AG04450 (cell line): ENCODE measurements at regions of chr5 and their contacts with region 1.

Region 1: GRCh38 chr5:73215891-73216610 is 43.1 kb downstream of the TMEM174 start:
- DNase-seq: peak; percentile 38
- H3K4me3 ChIP-seq: peak overlapping the region; percentile 62
- H3K27ac ChIP-seq: peak overlapping the region; percentile 59
- H3K27me3 ChIP-seq: no peaks in the 10 kb centered on the region
- CTCF ChIP-seq: peak; percentile 67

Region 2: DNA sequence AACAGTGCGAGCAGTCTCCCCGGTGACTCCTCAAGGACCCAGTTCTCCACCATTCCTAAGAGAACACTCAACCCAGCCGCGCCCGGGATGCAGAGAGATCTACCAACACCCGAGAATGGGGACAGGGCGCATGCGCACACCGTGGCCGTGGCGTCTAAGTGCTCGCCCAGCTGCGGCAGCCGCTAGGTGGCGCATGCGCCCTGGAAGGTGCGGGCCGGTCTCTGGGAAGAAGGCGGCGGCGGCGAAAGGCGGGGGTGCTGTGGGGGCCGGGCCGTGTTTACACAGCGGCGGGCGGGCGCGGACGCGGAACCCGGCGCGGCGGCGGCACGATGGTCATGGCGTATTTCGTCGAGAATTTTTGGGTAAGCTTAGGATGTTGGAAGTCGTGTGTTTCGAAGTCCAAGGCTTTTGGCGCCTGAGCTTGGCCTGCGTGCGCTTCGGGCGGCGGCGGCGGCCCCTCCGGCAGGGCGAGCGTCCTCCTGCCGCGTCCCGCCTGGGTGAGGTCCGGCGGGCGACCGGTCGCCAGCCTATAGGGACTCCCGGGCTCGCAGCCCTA is 260.2 kb before region 1 on chr5 and contains the start of gene FCHO2:
- CTCF ChIA-PET with region 1: interaction called, 10 read pairs
- POLR2A ChIA-PET with region 1: no interaction called
- DNase-seq: peak; percentile 90
- H3K4me3 ChIP-seq: peak within 1 kb of the TSS; percentile 72
- H3K27ac ChIP-seq: peak within 1 kb of the TSS; percentile 96
- H3K27me3 ChIP-seq: no peaks in the 10 kb centered on the region
- CTCF ChIP-seq: peak; percentile 70
- polyA plus RNA-seq, gene FCHO2: 10.4 and 12.5 TPM in 2 replicates

Region 3: GRCh38 chr5:73088026-73088425 is 128.0 kb before region 1 on chr5:
- CTCF ChIA-PET with region 1: interaction called, 38 read pairs
- POLR2A ChIA-PET with region 1: interaction called, 3 read pairs
- DNase-seq: no peak
- H3K4me3 ChIP-seq: no peak overlapping the region
- H3K27ac ChIP-seq: no peak overlapping the region
- H3K27me3 ChIP-seq: no peaks in the 10 kb centered on the region
- CTCF ChIP-seq: no peak

Region 4: DNA sequence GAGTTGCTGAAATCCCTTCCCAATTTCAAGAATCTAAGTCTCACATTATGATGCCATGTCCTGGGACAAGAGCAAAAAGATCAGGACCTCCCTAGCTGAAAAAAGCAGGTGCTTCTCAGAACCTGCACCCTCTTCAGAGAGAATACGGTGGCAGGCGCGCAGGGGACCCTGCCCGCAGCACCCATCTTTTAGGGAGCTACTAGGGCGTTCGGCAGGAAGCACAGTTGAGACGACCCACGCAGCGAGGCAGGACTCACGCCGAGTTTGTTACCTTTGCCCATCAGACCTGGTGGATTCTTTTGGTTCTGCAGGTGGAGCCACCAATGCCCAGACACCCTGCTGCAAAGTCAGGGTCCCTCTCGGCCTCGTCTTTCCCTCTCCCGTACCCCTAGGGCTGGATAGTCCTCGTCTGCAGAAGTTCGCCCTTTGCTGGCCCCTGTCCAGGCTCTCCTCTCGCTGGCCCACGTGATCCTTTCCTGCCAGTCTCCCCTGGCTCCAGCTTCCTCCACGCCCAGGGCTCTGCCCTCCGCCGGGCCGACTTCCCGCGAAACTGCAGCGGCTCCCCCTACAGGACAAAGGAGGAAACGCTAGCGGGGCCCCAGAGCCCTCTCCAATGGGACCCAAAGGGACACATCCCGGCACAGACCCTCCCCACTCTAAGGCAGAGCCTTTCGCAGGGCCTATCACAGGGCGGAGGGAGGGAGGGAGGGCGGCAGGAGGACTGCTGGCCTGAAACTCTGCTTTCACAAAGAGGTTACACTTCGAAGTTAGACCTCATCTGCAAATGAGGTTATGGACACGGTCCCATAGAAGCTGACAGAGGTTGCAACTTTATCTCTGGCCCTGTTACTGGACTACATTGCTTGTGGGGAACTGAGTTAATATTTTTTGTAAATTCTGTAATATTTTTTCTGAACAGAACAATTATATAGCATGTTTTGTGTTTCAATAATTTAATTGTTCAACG is 14.2 kb before region 1 on chr5:
- CTCF ChIA-PET with region 1: interaction called, 36 read pairs
- POLR2A ChIA-PET with region 1: no interaction called
- DNase-seq: peak; percentile 27
- H3K4me3 ChIP-seq: no peak overlapping the region
- H3K27ac ChIP-seq: no peak overlapping the region
- H3K27me3 ChIP-seq: peaks cover 8% of the 10 kb centered on the region
- CTCF ChIP-seq: peak; percentile 81

Region 5: DNA sequence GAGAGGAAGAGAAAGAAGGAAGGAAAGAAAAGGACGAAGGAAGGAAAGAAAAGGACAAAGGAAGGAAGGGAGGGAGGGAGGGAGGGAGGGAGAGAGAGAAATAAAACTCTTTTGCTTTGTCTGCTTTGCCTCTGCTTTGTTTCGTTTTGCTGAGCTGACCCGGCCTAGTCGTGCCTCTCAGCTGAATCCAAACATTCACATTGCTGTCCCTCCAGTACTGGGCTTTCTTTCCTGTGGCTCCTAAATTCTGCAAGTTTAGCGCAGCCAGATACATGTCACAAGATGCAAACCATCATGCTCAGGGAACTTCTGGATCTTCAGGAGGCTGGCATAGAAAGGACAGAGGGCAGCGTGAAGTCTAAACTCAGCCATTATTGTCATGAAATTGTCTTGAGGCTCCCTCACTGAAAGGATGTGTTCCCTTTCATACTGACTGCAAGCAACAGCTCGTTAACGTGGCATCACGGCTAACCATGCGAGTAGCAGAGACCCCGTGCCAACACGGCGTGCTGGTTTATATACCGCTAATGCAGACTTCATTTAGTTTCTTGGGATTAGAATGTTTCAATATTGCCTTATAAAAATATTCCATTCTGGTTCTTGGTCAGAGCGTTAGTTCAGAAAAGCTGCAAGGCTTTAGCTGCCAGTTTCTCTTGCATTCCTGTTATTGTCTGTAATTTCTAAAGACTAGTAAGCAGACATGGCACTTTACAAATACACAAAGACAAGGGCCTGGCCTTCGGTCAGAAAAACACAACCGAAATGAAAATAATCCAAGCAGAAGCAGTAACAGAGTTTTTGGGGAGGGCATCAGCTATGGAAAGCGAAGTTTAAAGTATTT is 51.1 kb after region 1 on chr5:
- CTCF ChIA-PET with region 1: interaction called, 18 read pairs
- POLR2A ChIA-PET with region 1: no interaction called
- DNase-seq: no peak
- H3K4me3 ChIP-seq: peak overlapping the region; percentile 29
- H3K27ac ChIP-seq: no peak overlapping the region
- H3K27me3 ChIP-seq: no peaks in the 10 kb centered on the region
- CTCF ChIP-seq: no peak

Region 6: GRCh38 chr5:73448463-73449136 is 232.5 kb after region 1 on chr5 and contains the start of gene FOXD1:
- CTCF ChIA-PET with region 1: interaction called, 61 read pairs
- POLR2A ChIA-PET with region 1: interaction called, 27 read pairs
- DNase-seq: peak; percentile 93
- H3K4me3 ChIP-seq: peak within 1 kb of the TSS; percentile 85
- H3K27ac ChIP-seq: peak within 1 kb of the TSS; percentile 90
- H3K27me3 ChIP-seq: no peaks in the 10 kb centered on the region
- CTCF ChIP-seq: peak; percentile 8; the same call in 1 of the 2 replicates
- polyA plus RNA-seq, gene FOXD1: 7.5 and 8.4 TPM in 2 replicates

Region 7: GRCh38 chr5:74185599-74185998 is 969.5 kb after region 1 on chr5:
- CTCF ChIA-PET with region 1: no interaction called
- POLR2A ChIA-PET with region 1: no interaction called
- DNase-seq: no peak
- H3K4me3 ChIP-seq: no peak overlapping the region
- H3K27ac ChIP-seq: no peak overlapping the region
- H3K27me3 ChIP-seq: no peaks in the 10 kb centered on the region
- CTCF ChIP-seq: no peak